Activated CD8-positive, alpha-beta T cell treated with anti-CD3 and anti-CD28 coated beads for 36 hours (primary cell): ENCODE measurements at regions of chr4 and their contacts with region 1.

Region 1: DNA sequence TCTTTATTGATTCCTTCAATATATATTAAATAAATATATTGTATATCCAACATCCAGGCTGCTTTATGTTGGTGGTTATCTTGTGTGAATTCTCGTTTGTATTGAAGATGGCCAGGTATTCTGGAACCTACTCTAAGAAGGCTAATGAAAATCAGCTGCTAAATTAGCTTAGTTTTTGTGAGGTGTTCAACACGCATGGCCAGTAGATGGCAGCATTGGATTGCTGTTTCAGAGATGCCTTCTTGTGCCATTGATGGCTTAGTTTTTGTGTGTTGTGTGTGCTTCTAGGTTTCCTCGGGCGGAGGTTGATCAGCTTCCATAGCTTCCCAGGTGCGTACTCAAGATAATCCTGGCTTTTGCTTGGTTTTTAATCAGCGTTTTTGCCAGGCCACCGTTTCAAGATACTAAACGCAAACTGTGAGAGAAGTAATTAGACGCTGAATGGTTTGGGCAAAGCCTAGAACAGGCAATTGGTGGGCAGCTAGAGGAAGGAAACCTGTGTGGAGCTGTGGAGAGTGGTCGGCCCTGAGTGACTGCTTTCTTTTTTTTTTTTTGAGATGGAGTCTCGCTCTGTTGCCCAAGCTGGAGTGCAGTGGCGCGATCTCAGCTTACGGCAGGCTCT is 15.1 kb downstream of the NOCT start:
- DNase-seq: peak; percentile 84
- ATAC-seq: peak; percentile 81
- H3K4me3 Mint-ChIP-seq: no peak overlapping the region
- H3K27ac Mint-ChIP-seq: no peak overlapping the region
- H3K4me1 Mint-ChIP-seq: peaks cover 12% of the 10 kb centered on the region
- H3K27me3 Mint-ChIP-seq: no peaks in the 10 kb centered on the region
- CTCF ChIP-seq: peak; percentile 71

Region 2: DNA sequence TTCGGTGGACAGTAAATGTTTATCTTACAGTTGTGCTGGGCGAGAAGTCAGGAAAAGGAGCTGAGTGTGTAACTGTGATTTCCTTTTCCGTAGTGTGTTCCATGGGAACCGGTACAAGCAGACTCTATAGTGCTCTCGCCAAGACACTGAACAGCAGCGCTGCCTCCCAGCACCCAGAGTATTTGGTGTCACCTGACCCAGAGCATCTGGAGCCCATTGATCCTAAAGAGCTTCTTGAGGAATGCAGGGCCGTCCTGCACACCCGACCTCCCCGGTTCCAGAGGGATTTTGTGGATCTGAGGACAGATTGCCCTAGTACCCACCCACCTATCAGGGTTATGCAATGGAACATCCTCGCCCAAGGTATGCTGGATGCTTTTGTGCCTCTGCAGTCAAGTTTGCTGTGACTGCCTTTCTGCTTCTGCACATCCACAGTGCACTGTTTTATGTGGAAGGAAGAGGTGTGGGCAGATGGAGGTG is 12.3 kb after region 1 on chr4:
- CTCF ChIA-PET with region 1: interaction called, 52 read pairs
- POLR2A ChIA-PET with region 1: interaction called, 5 read pairs
- intact Hi-C with region 1: no loop called
- DNase-seq: no peak
- ATAC-seq: no peak
- H3K4me3 Mint-ChIP-seq: no peak overlapping the region
- H3K27ac Mint-ChIP-seq: no peak overlapping the region
- H3K4me1 Mint-ChIP-seq: peaks cover 13% of the 10 kb centered on the region
- H3K27me3 Mint-ChIP-seq: no peaks in the 10 kb centered on the region
- CTCF ChIP-seq: no peak

Region 3: GRCh38 chr4:139060591-139060990 is 29.9 kb after region 1 on chr4:
- CTCF ChIA-PET with region 1: interaction called, 36 read pairs
- POLR2A ChIA-PET with region 1: interaction called, 3 read pairs
- intact Hi-C with region 1: no loop called
- DNase-seq: no peak
- ATAC-seq: no peak
- H3K4me3 Mint-ChIP-seq: no peak overlapping the region
- H3K27ac Mint-ChIP-seq: peak overlapping the region; percentile 36
- H3K4me1 Mint-ChIP-seq: peaks cover 8% of the 10 kb centered on the region
- H3K27me3 Mint-ChIP-seq: no peaks in the 10 kb centered on the region
- CTCF ChIP-seq: no peak

Region 4: GRCh38 chr4:139099366-139099982 is 68.7 kb after region 1 on chr4:
- CTCF ChIA-PET with region 1: interaction called, 20 read pairs
- POLR2A ChIA-PET with region 1: no interaction called
- intact Hi-C with region 1: no loop called
- DNase-seq: peak; percentile 81
- ATAC-seq: peak; percentile 70
- H3K4me3 Mint-ChIP-seq: no peak overlapping the region
- H3K27ac Mint-ChIP-seq: no peak overlapping the region
- H3K4me1 Mint-ChIP-seq: no peaks in the 10 kb centered on the region
- H3K27me3 Mint-ChIP-seq: no peaks in the 10 kb centered on the region
- CTCF ChIP-seq: peak; percentile 86

Region 5: DNA sequence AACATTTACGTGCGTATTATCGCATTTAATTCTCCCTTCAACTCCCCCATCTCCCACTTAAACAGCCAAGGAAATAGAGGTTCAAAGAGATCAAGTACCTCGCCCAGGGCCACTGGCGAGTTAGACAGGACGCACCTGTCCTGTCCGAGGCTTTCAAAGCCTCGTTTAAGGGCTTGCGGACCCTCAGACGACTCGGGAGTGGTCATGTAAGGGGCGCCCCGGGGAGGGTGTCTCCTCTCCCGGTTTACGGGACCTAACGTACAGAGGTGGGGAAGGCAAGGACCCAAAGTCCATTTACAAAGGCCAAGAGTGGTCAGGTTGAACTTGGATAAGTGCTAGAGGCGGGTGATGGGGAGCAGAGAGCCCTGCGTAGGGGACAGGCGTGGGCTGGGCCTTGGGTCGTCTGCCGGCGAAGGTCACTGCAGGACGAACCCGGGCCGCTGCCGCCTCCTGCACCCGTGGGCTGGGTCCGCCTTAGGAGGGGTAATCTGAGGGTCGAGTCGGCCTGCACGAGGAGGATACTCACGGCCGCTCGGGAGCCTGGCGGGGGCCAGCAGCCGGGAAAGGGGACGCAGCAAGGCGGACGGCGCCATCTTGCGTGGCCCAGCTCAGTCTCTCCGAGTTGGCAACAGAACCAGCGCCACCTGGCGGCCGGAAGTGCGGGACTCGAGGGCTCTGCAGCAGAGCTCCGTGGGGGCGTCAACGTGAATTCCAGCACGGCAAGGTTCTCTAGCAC is 264.6 kb after region 1 on chr4:
- CTCF ChIA-PET with region 1: interaction called, 21 read pairs
- POLR2A ChIA-PET with region 1: no interaction called
- intact Hi-C with region 1: no loop called
- DNase-seq: peak; percentile 99
- ATAC-seq: peak; percentile 91
- H3K4me3 Mint-ChIP-seq: peak overlapping the region; percentile 98
- H3K27ac Mint-ChIP-seq: peak overlapping the region; percentile 98
- H3K4me1 Mint-ChIP-seq: peaks cover 46% of the 10 kb centered on the region
- H3K27me3 Mint-ChIP-seq: no peaks in the 10 kb centered on the region
- CTCF ChIP-seq: peak; percentile 92